Adrenal gland (tissue), 19 donors: ENCODE measurements at regions of chr1 and their contacts with region 1.

Region 1: GRCh38 chr1:2194898-2195673 is 514 bp upstream of the FAAP20 start:
- DNase-seq: peak; percentile 89 to 95 (median 92)
- H3K4me3 ChIP-seq: peak overlapping the region; percentile 11 to 84 (median 30)
- H3K27ac ChIP-seq: peak overlapping the region; percentile 8 to 97 (median 87)
- H3K4me1 ChIP-seq: peaks cover 11 to 56% of the 10 kb centered on the region in 2 donors
- H3K27me3 ChIP-seq: no peaks in the 10 kb centered on the region
- CTCF ChIP-seq: peak; percentile 53 to 99 (median 96)
- POLR2A ChIP-seq: peak in 1 of 2 donors; percentile 25

Region 2: GRCh38 chr1:2242814-2243725 is 48.0 kb after region 1 on chr1:
- intact Hi-C with region 1: no loop called
- DNase-seq: peak in 5 of 7 donors; percentile 31 to 75 (median 51)
- H3K4me3 ChIP-seq: no peak overlapping the region
- H3K27ac ChIP-seq: peak overlapping the region in 1 of 5 donors; percentile 21
- H3K4me1 ChIP-seq: peaks cover 33 to 63% of the 10 kb centered on the region in 2 donors
- H3K27me3 ChIP-seq: no peaks in the 10 kb centered on the region
- CTCF ChIP-seq: no peak
- POLR2A ChIP-seq: no peak

Region 3: DNA sequence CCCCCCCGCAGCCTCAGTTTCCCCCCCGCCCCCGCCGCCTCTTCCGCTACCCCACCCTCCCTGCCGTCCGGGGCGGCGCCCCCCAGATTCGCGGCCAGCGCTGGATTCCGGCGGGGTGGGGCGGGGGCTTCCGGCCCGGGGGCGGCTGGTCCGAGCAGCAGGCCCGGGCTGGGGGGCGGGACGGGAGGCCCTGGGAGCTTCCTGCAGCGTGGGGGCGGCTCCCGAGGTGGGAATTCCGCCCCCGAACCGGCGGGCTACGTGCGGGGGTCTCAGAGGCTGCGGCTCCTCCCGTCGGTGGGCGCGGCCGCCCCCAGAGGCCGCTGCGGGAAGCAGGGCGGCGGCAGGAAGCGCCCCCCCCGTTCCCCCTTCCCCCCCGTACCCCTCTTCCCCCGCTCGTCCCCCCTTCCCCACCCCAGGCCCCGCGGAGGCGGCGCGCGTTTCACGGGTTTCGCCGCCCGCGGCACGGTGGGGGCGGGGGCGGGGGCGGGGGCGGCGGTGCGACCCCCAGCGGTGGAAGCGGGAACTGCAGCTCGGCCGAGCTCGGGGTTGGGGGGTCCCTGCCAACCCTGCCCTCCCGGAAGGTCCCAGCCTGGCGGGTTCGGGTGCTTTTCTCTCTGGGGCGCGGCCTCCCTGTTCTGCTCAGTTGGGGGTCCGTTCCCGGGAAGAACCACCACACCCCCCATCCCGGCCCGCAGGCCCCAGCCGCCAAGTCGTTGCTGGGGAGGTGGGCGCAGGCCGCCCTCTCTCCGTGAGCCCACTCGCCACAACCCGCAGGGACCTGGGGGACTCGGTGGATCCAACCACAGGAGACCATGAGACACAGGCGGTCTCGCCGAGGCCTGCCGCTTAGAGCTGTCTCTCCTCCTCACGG is 120.0 kb after region 1 on chr1:
- intact Hi-C with region 1: loop called in 1 of 2 experiments (anchors 5 kb)
- DNase-seq: peak in 4 of 7 donors; percentile 40 to 54 (median 50)
- H3K4me3 ChIP-seq: peak overlapping the region in 2 of 4 donors; percentile 81 to 86
- H3K27ac ChIP-seq: peak overlapping the region in 4 of 5 donors; percentile 65 to 90 (median 74)
- H3K4me1 ChIP-seq: peaks cover 11 to 43% of the 10 kb centered on the region in 2 donors
- H3K27me3 ChIP-seq: no peaks in the 10 kb centered on the region
- CTCF ChIP-seq: peak; percentile 39 to 95 (median 64)
- POLR2A ChIP-seq: no peak

Region 4: GRCh38 chr1:2381741-2382620 is 186.9 kb after region 1 on chr1:
- intact Hi-C with region 1: loop called (anchors 2 kb)
- DNase-seq: peak; percentile 78 to 90 (median 85)
- H3K4me3 ChIP-seq: no peak overlapping the region
- H3K27ac ChIP-seq: no peak overlapping the region
- H3K4me1 ChIP-seq: peaks cover 0 to 4% of the 10 kb centered on the region in 2 donors
- H3K27me3 ChIP-seq: no peaks in the 10 kb centered on the region
- CTCF ChIP-seq: peak; percentile 86 to 98 (median 94)
- POLR2A ChIP-seq: no peak

Region 5: GRCh38 chr1:2438038-2438437 is 243.0 kb after region 1 on chr1:
- intact Hi-C with region 1: no loop called
- DNase-seq: no peak
- H3K4me3 ChIP-seq: no peak overlapping the region
- H3K27ac ChIP-seq: no peak overlapping the region
- H3K4me1 ChIP-seq: no peaks in the 10 kb centered on the region
- H3K27me3 ChIP-seq: peaks cover 20% of the 10 kb centered on the region
- CTCF ChIP-seq: no peak
- POLR2A ChIP-seq: no peak

Region 6: GRCh38 chr1:2545759-2546514 is 350.9 kb after region 1 on chr1:
- intact Hi-C with region 1: loop called in 1 of 2 experiments (anchors 10 kb)
- DNase-seq: peak; percentile 93 to 97 (median 94)
- H3K4me3 ChIP-seq: peak overlapping the region in 2 of 4 donors; percentile 32 to 62
- H3K27ac ChIP-seq: peak overlapping the region; percentile 24 to 98 (median 92)
- H3K4me1 ChIP-seq: peaks cover 41 to 50% of the 10 kb centered on the region in 2 donors
- H3K27me3 ChIP-seq: no peaks in the 10 kb centered on the region
- CTCF ChIP-seq: no peak
- POLR2A ChIP-seq: peak in 1 of 2 donors; percentile 38